ENCODE measurements at regions of chr13 and their contacts with region 1.

Region 1: GRCh38 chr13:32150794-32151193 is 119.2 kb downstream of the FRY start:
- DNase-seq: peak; percentile 59 to 82 (median 78)
- H3K4me3 ChIP-seq: no peak overlapping the region
- H3K27ac ChIP-seq: peak overlapping the region in 1 of 2 donors; percentile 43
- H3K4me1 ChIP-seq: peaks cover 5% of the 10 kb centered on the region
- H3K27me3 ChIP-seq: no peaks in the 10 kb centered on the region
- CTCF ChIP-seq: no peak
- EP300 ChIP-seq: peak; percentile 50
- POLR2A ChIP-seq: no peak

Region 2: GRCh38 chr13:32080328-32080744 is 70.5 kb before region 1 on chr13:
- intact Hi-C with region 1: no loop called
- DNase-seq: no peak
- H3K4me3 ChIP-seq: no peak overlapping the region
- H3K27ac ChIP-seq: no peak overlapping the region
- H3K4me1 ChIP-seq: no peaks in the 10 kb centered on the region
- H3K27me3 ChIP-seq: no peaks in the 10 kb centered on the region
- CTCF ChIP-seq: no peak
- EP300 ChIP-seq: no peak
- POLR2A ChIP-seq: no peak

Region 3: GRCh38 chr13:32162395-32163005 is 11.7 kb after region 1 on chr13:
- intact Hi-C with region 1: loop called in 1 of 4 experiments (anchors 1 kb)
- DNase-seq: no peak
- H3K4me3 ChIP-seq: no peak overlapping the region
- H3K27ac ChIP-seq: no peak overlapping the region
- H3K4me1 ChIP-seq: no peaks in the 10 kb centered on the region
- H3K27me3 ChIP-seq: no peaks in the 10 kb centered on the region
- CTCF ChIP-seq: no peak
- EP300 ChIP-seq: no peak
- POLR2A ChIP-seq: no peak

Region 4: GRCh38 chr13:32752997-32753606 is 602.3 kb after region 1 on chr13:
- intact Hi-C with region 1: no loop called
- DNase-seq: no peak
- H3K4me3 ChIP-seq: no peak overlapping the region
- H3K27ac ChIP-seq: no peak overlapping the region
- H3K4me1 ChIP-seq: no peaks in the 10 kb centered on the region
- H3K27me3 ChIP-seq: no peaks in the 10 kb centered on the region
- CTCF ChIP-seq: no peak
- EP300 ChIP-seq: no peak
- POLR2A ChIP-seq: no peak